Activated T-helper 2 cell treated with anti-CD3 and anti-CD28 coated beads, Interferon-gamma antibody, Interleukin-2, Interleukin-4, amounts not matched to agents 10 μg/mL and 5 μg/mL and 100 μg/mL, durations not matched to agents 14 hours and 24 hours and 36 hours (primary cell): ENCODE measurements at regions of chr1 and their contacts with region 1.

Region 1: GRCh38 chr1:241611063-241611462 is 29.1 kb downstream of the CHML start:
- DNase-seq: no peak
- H3K4me3 Mint-ChIP-seq: no peak overlapping the region
- H3K27ac Mint-ChIP-seq: no peak overlapping the region
- H3K4me1 Mint-ChIP-seq: peaks cover 22% of the 10 kb centered on the region
- H3K27me3 Mint-ChIP-seq: no peaks in the 10 kb centered on the region

Region 2: DNA sequence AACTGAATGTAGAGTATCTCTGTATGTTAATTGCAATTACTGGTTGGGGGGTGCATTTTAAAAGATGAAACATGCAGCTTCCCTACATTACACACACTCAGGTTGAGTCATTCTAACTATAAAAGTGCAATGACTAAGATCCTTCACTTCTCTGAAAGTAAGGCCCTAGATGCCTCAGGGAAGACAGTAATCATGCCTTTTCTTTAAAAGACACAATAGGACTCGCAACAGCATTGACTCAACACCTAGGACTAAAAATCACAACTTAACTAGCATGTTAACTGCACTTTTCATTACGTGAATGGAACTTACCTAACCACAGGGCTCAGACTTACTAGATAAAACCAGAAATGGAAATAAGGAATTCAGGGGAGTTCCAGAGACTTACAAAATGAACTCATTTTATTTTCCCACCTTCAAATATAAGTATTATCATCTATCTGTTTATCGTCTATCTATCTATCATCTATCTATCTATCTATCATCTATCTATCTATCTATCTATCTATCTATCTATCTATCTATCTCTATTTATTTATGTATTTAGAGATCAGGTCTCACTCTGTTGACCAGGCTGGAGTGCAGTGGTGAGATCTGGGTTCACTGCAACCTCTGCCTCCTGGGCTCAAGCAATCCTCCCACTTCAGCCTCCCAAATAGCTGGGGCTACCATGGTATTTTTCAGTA is 18.6 kb before region 1 on chr1:
- intact Hi-C with region 1: loop called (anchors 2 kb)
- DNase-seq: no peak
- H3K4me3 Mint-ChIP-seq: no peak overlapping the region
- H3K27ac Mint-ChIP-seq: peak overlapping the region; percentile 53
- H3K4me1 Mint-ChIP-seq: peaks cover 20% of the 10 kb centered on the region
- H3K27me3 Mint-ChIP-seq: no peaks in the 10 kb centered on the region

Region 3: DNA sequence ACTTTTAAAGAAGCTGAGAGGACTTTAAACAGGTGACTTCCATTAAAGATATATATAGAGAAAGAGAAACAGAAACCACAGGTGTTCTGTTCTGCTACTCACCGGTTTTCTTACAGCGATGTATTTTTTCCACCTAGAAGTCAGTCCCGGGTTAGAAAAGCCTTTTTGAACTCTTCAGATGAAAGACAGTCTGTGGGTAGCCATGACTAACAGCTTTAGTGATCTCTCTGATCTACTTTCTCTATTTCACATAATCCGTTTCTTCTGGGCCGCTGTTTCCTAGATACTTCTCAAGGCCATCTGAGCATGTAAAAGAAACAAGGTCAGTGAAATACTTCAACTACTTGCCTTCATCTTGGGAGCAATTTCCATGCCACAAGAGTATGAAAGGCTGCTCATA is 66.1 kb after region 1 on chr1:
- intact Hi-C with region 1: loop called (anchors 2 kb)
- DNase-seq: peak; percentile 19
- H3K4me3 Mint-ChIP-seq: no peak overlapping the region
- H3K27ac Mint-ChIP-seq: no peak overlapping the region
- H3K4me1 Mint-ChIP-seq: peaks cover 11% of the 10 kb centered on the region
- H3K27me3 Mint-ChIP-seq: peaks cover 11% of the 10 kb centered on the region

Region 4: GRCh38 chr1:241985787-241986186 is 374.7 kb after region 1 on chr1:
- intact Hi-C with region 1: loop called (anchors 1 kb)
- DNase-seq: no peak
- H3K4me3 Mint-ChIP-seq: no peak overlapping the region
- H3K27ac Mint-ChIP-seq: no peak overlapping the region
- H3K4me1 Mint-ChIP-seq: no peaks in the 10 kb centered on the region
- H3K27me3 Mint-ChIP-seq: no peaks in the 10 kb centered on the region

Region 5: DNA sequence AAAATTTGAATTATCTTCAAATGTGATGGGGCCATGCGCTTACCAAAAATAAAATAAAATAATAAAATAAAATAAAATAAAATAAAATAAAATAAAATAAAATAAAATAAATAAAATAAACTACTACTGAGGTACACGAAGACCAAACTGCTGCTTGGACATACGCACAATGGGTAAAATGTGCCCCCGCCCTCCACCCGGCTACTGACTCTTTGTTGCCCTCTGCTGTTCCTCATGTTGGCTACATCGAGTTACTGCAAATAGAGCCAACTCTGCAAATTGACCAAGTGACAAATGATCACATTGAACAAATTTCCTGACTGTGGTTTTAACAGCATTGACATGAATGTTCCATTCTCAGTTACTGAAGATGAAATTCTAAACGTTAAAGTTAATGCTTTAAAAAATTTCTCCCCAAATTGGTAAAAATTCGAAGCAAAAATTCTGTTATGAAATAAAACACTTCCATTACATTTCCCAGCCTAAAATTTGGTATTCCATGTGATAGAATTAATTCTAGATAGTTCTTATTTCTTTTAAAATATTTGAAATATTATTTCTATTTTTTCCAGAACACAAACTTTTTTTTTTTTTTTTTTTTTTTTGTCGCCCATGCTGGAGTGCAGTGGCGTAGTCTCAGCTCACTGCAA is 406.6 kb after region 1 on chr1:
- intact Hi-C with region 1: loop called (anchors 5 kb)
- DNase-seq: no peak
- H3K4me3 Mint-ChIP-seq: no peak overlapping the region
- H3K27ac Mint-ChIP-seq: no peak overlapping the region
- H3K4me1 Mint-ChIP-seq: no peaks in the 10 kb centered on the region
- H3K27me3 Mint-ChIP-seq: no peaks in the 10 kb centered on the region

Region 6: GRCh38 chr1:242147096-242147976 is 536.3 kb after region 1 on chr1:
- intact Hi-C with region 1: no loop called
- DNase-seq: no peak
- H3K4me3 Mint-ChIP-seq: no peak overlapping the region
- H3K27ac Mint-ChIP-seq: no peak overlapping the region
- H3K4me1 Mint-ChIP-seq: peaks cover 2% of the 10 kb centered on the region
- H3K27me3 Mint-ChIP-seq: no peaks in the 10 kb centered on the region